Adrenal gland (tissue), 19 donors: ENCODE measurements at regions of chr1 and their contacts with region 1.

Region 1: GRCh38 chr1:239396995-239397394 is 10.6 kb downstream of the CHRM3 start:
- DNase-seq: no peak
- H3K4me3 ChIP-seq: no peak overlapping the region
- H3K27ac ChIP-seq: no peak overlapping the region
- H3K4me1 ChIP-seq: no peaks in the 10 kb centered on the region
- H3K27me3 ChIP-seq: no peaks in the 10 kb centered on the region
- CTCF ChIP-seq: no peak
- POLR2A ChIP-seq: no peak

Region 2: GRCh38 chr1:239527051-239527693 is 130.2 kb after region 1 on chr1:
- intact Hi-C with region 1: no loop called
- DNase-seq: no peak
- H3K4me3 ChIP-seq: no peak overlapping the region
- H3K27ac ChIP-seq: no peak overlapping the region
- H3K4me1 ChIP-seq: no peaks in the 10 kb centered on the region
- H3K27me3 ChIP-seq: no peaks in the 10 kb centered on the region
- CTCF ChIP-seq: no peak
- POLR2A ChIP-seq: no peak

Region 3: GRCh38 chr1:239898062-239898730 is 501.2 kb after region 1 on chr1:
- intact Hi-C with region 1: loop called in 1 of 2 experiments (anchors 2 kb)
- DNase-seq: peak; percentile 68 to 90 (median 82)
- H3K4me3 ChIP-seq: no peak overlapping the region
- H3K27ac ChIP-seq: no peak overlapping the region
- H3K4me1 ChIP-seq: no peaks in the 10 kb centered on the region
- H3K27me3 ChIP-seq: no peaks in the 10 kb centered on the region
- CTCF ChIP-seq: peak; percentile 92 to 94 (median 93)
- POLR2A ChIP-seq: no peak